Activated CD4-positive, alpha-beta T cell treated with anti-CD3 and anti-CD28 coated beads for 36 hours (primary cell): ENCODE measurements at regions of chr9 and their contacts with region 1.

Region 1: DNA sequence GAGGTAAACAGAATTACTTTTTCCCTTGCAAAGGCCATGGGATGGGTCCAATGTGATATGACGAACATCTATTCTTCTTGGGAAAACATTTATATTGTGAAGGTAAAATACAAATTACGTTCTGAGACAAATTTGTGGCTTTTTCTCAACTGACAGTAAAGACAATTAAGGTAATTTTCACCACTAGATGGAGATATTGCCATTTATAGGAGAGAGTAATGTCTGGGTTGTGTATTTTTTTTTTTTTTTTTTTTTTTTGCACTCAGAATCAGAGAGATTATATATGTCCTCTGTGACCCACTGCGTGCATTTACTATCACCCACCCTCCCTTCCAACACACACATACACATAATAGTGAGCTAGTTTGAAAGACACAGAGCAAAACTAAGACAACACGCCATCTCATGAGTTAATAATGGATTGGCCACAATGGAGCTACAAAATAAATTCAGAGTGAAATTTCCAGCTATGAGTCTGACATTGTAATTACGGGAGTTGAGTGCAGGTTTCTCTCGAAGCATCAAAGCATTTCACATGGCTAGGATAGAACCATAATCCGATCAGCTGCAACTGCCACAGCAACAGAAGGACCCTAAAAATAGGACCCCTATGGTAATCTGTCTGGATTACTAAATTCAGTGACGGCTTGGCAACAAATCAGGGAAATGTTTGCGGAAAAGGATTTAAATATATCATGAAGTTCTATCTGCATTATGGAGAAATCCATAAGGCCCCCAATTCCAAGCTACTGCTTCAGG is 49.2 kb downstream of the ANXA1 start:
- DNase-seq: no peak
- ATAC-seq: peak; percentile 47
- H3K4me3 Mint-ChIP-seq: no peak overlapping the region
- H3K27ac Mint-ChIP-seq: no peak overlapping the region
- H3K4me1 Mint-ChIP-seq: no peaks in the 10 kb centered on the region
- H3K27me3 Mint-ChIP-seq: peaks cover 3% of the 10 kb centered on the region

Region 2: GRCh38 chr9:73565833-73566465 is 365.1 kb after region 1 on chr9:
- CTCF ChIA-PET with region 1: no interaction called
- POLR2A ChIA-PET with region 1: no interaction called
- intact Hi-C with region 1: loop called in 1 of 2 experiments (anchors 1 kb)
- DNase-seq: peak; percentile 4
- ATAC-seq: no peak
- H3K4me3 Mint-ChIP-seq: no peak overlapping the region
- H3K27ac Mint-ChIP-seq: no peak overlapping the region
- H3K4me1 Mint-ChIP-seq: no peaks in the 10 kb centered on the region
- H3K27me3 Mint-ChIP-seq: no peaks in the 10 kb centered on the region

Region 3: DNA sequence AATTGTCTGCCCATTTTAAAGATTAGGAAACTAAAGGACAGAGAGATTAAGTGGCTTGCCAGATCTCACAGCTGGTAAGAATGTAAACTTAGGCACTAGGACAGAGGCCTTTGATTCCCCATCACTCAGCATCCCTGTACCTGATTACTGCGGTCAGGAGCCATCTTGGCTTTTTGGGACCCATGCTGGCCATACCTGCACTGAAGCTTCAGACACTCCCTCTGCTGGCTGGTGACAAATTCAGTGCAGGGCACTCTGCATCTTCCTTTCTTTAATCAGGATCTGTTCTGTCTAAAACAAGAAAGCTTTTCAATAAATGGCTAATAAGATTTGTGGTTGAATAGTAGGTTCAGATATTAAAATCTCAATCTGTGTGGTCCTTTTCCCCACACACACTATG is 1080.8 kb after region 1 on chr9:
- CTCF ChIA-PET with region 1: no interaction called
- POLR2A ChIA-PET with region 1: no interaction called
- intact Hi-C with region 1: loop called in 1 of 2 experiments (anchors 2 kb)
- DNase-seq: no peak
- ATAC-seq: no peak
- H3K4me3 Mint-ChIP-seq: no peak overlapping the region
- H3K27ac Mint-ChIP-seq: no peak overlapping the region
- H3K4me1 Mint-ChIP-seq: no peaks in the 10 kb centered on the region
- H3K27me3 Mint-ChIP-seq: no peaks in the 10 kb centered on the region

Region 4: DNA sequence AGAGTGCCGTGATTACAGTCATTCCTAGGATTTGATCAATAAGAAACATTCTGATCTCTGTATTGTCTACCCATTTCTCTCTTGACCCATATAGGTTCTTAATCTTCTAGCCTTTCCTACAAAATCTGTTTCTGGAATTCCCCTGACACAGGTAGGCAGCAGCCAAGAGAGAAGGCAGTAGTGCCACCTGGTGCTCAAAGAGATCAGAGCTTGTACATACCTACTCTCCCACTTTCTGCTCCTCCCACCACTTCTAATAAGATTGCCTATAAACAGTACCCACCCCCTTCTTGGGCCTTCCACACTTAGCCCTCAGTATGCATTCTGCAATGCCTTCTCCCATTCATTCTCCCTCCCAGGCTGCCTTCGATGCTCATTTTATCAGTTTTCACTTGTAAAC is 1178.8 kb after region 1 on chr9:
- CTCF ChIA-PET with region 1: no interaction called
- POLR2A ChIA-PET with region 1: no interaction called
- intact Hi-C with region 1: loop called in 1 of 2 experiments (anchors 2 kb)
- DNase-seq: peak; percentile 40
- ATAC-seq: no peak
- H3K4me3 Mint-ChIP-seq: no peak overlapping the region
- H3K27ac Mint-ChIP-seq: no peak overlapping the region
- H3K4me1 Mint-ChIP-seq: no peaks in the 10 kb centered on the region
- H3K27me3 Mint-ChIP-seq: no peaks in the 10 kb centered on the region

Region 5: DNA sequence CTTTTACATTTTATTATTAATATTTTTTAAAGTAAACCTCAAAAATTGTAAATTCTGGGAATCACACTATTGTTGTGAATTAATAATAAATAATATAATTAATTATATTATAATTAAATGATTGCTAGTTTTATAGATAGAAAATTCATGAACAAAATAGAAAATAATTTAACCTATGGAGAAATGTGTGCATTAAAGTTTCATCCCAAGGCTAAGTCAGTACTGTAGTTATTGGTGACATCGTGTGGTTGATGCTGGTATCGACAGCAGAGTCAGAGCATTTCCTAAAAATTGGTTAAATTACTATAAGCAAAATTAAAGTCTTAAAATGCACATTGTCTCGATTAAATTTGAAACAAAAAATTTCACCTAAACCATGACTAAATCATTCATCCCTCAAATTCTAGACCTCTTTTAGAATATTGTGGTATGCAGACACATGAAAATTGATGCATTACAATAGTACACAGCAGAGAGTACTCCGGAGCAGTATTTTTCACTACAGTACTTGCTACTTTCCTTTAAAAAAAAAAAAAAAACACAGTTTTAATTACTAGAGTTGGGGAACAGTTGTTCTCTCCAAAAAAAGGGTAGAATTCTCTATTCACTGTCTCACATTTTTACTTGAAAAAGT is 1370.1 kb after region 1 on chr9:
- CTCF ChIA-PET with region 1: interaction called, 3 read pairs
- POLR2A ChIA-PET with region 1: no interaction called
- intact Hi-C with region 1: loop called (anchors 2 kb)
- DNase-seq: peak; percentile 33
- ATAC-seq: no peak
- H3K4me3 Mint-ChIP-seq: no peak overlapping the region
- H3K27ac Mint-ChIP-seq: no peak overlapping the region
- H3K4me1 Mint-ChIP-seq: no peaks in the 10 kb centered on the region
- H3K27me3 Mint-ChIP-seq: no peaks in the 10 kb centered on the region

Region 6: GRCh38 chr9:74645007-74645639 is 1444.2 kb after region 1 on chr9:
- CTCF ChIA-PET with region 1: no interaction called
- POLR2A ChIA-PET with region 1: no interaction called
- intact Hi-C with region 1: loop called in 1 of 2 experiments (anchors 1 kb)
- DNase-seq: no peak
- ATAC-seq: no peak
- H3K4me3 Mint-ChIP-seq: no peak overlapping the region
- H3K27ac Mint-ChIP-seq: no peak overlapping the region
- H3K4me1 Mint-ChIP-seq: no peaks in the 10 kb centered on the region
- H3K27me3 Mint-ChIP-seq: peaks cover 2% of the 10 kb centered on the region

Region 7: DNA sequence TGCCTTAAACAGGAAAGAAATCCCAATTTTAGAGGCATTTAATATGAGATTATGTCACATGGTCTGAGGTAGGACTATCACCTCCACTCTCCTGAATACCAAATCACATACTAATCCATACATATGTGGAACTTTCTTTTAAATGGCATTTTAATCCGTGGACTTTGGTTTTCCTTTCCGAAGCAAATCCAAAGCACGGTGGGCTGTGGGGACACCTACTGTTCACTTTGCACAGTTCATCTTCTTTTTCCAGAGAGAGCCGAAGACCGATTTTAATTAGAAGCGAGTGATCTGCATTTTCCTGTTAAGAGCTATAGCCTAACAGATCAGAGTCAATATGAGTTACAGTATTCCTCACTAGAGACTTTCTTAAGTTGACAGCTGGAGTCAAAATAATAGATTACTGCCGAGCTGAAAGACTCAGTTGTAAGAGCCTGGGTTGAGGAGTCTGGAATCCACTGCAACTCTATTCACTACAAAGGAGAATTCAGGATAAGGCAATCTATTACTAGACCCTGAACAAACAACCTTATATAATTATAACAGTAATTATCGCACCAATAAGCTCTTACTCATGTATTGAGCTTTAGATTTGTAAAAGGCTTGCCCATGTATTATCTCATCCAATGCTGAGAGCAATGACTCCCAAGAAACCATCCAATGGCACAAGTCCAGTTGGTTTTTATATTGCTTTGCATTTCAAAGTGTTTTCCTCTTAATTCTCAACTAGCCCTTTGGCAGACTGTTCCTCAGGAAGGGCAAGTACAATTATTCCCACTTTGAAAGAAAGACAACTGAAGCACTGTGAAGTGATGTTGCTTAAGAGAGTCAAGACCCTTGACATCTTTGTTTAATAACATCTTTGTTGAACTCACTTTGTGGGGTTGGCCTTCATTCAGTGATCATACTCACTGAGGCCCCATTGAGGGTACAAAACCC is 1542.2 kb after region 1 on chr9:
- CTCF ChIA-PET with region 1: interaction called, 3 read pairs
- POLR2A ChIA-PET with region 1: no interaction called
- intact Hi-C with region 1: loop called in 1 of 2 experiments (anchors 5 kb)
- DNase-seq: peak; percentile 32
- ATAC-seq: no peak
- H3K4me3 Mint-ChIP-seq: no peak overlapping the region
- H3K27ac Mint-ChIP-seq: no peak overlapping the region
- H3K4me1 Mint-ChIP-seq: no peaks in the 10 kb centered on the region
- H3K27me3 Mint-ChIP-seq: peaks cover 27% of the 10 kb centered on the region